Transverse colon (tissue), 4 donors: ENCODE measurements at regions of chr19 and their contacts with region 1.

Region 1: DNA sequence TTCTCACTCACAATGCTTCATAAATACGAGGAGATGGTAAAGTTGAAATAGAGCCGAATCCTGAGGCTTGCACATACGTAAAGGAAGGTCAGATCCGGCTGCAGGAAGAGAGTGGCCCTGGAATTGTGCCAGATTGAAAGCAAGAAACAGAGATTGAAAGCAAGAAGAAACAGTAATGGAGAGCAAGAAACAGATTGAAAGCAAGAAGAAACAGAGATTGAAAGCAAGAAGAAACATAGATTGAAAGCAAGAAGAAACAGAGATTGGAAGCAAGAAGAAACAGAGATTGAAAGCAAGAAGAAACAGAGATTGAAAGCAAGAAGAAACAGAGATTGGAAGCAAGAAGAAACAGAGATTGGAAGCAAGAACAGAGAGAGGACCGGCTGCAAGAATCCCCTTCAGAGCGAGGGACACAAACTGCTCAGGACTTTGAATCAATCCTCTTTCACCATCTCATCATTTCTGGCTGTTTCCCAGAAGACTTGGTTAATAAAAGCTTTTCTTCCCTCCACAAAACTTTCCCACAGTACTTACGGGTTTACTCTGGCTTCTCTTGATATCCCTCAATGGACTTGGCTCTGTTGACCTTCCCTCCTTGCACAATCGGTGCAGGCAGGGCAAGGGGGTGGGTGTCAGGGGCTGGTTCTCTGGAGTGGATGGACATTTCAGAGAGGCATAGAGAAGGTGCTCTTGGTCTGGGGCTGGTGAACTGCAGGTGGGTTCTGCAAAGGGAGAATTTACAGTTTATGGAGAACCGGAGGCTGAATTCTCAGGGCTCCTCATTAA is 25.5 kb downstream of the OR7A5 start:
- DNase-seq: no peak
- H3K4me3 ChIP-seq: no peak overlapping the region
- H3K27ac ChIP-seq: no peak overlapping the region
- H3K4me1 ChIP-seq: no peaks in the 10 kb centered on the region
- H3K27me3 ChIP-seq: no peaks in the 10 kb centered on the region
- CTCF ChIP-seq: no peak
- EP300 ChIP-seq: no peak
- POLR2A ChIP-seq: no peak

Region 2: GRCh38 chr19:14775869-14776586 is 33.4 kb before region 1 on chr19:
- in situ Hi-C with region 1: no loop called
- intact Hi-C with region 1: no loop called
- DNase-seq: peak; percentile 17
- H3K4me3 ChIP-seq: peak overlapping the region in 3 of 4 donors; percentile 4 to 39 (median 24)
- H3K27ac ChIP-seq: peak overlapping the region; percentile 11 to 37 (median 28)
- H3K4me1 ChIP-seq: peaks cover 0 to 10% (median 5%) of the 10 kb centered on the region in 4 donors
- H3K27me3 ChIP-seq: peaks cover 35% of the 10 kb centered on the region
- CTCF ChIP-seq: no peak
- EP300 ChIP-seq: no peak
- POLR2A ChIP-seq: no peak

Region 3: DNA sequence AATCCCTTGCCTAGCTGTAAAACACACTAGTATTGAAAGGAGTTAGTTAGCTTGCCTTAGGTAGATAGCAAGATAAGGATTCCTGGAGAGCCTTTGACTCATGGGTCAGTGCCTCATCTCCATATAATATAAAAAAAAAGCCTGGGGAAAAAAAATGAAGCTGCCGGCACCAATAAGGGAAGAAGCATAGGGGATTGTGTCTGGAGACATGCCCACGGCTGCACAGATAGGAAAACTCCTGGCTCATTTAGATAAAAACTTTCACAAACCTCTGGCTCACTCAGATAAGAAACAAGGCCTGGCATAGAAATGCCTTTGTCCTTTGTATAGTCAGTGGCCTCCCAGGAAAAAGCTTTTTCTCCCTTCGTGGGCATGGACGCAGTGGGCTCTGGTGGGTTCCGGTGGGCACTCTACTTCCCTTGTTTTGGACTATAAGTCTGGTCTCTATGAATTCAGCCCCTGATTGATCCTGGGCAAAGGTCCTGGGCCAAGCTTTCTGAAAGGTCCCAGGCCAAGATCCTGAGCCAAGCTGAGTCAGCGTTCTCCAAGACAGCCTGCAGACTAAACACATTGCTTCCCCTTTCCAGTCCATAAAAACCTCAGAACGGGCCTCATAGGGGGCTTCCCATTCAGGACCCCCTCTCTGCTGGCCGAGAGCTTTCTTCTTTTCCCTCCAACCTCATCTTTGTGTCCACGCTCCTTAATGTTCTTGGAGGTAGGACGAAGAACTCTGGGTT is 81.3 kb after region 1 on chr19:
- in situ Hi-C with region 1: no loop called
- intact Hi-C with region 1: loop called (anchors 2 kb)
- DNase-seq: peak; percentile 8
- H3K4me3 ChIP-seq: no peak overlapping the region
- H3K27ac ChIP-seq: no peak overlapping the region
- H3K4me1 ChIP-seq: peaks cover 0 to 7% (median 2%) of the 10 kb centered on the region in 4 donors
- H3K27me3 ChIP-seq: peaks cover 4% of the 10 kb centered on the region
- CTCF ChIP-seq: no peak
- EP300 ChIP-seq: no peak
- POLR2A ChIP-seq: no peak

Region 4: DNA sequence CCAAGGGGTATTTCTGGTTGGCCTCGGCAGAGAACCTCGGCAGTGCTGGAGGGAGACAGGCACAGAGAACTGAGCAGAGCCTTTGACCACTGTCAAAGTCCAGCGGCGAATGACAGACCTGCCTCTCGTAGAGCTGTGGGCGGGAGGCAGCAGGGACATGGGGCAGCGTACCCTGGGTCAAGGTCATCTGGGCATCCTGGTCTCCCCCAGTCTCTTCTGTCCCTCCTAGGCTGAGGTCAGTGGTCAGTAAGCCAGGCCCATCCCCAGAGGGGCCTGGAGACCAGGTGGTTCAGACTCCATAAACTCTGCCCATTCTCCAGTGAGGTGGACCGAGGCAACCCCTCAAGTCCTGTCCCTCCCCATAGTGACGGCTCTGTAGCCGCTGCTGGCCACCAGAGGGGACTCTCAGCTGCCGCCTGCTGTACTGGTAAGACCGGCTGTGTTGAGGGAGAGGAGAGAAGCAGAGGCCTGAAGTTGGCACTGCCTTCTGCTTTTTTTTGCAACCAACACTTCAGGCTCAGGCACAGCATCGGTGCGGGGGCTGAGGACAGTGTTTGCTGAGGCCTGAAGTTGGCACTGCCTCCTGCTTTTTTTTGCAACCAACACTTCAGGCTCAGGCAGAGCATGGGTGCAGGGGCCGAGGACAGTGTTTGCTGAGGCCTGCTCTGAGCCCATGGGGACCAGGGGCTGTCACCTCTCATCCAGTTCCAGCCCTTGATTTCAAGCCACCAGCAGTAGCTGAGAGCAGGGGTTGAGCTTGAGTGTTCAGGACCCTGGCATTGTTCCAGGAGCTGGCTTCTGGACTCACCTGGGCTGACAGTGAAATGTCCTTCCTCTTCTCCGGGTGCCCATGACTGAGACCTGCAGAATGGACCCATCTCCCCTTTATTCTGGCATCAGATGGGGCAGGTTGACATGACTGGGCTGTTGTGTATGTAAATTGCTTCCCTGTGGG is 670.2 kb after region 1 on chr19 and contains the start of gene PGLYRP2:
- in situ Hi-C with region 1: no loop called
- intact Hi-C with region 1: loop called (anchors 10 kb)
- DNase-seq: no peak
- H3K4me3 ChIP-seq: no peak within 1 kb of the TSS
- H3K27ac ChIP-seq: no peak within 1 kb of the TSS
- H3K4me1 ChIP-seq: no peaks in the 10 kb centered on the region
- H3K27me3 ChIP-seq: no peaks in the 10 kb centered on the region
- CTCF ChIP-seq: no peak
- EP300 ChIP-seq: no peak
- POLR2A ChIP-seq: no peak
- total RNA-seq, gene PGLYRP2: not detected